Pancreas (tissue), 10 donors: ENCODE measurements at regions of chr16 and their contacts with region 1.

Region 1: DNA sequence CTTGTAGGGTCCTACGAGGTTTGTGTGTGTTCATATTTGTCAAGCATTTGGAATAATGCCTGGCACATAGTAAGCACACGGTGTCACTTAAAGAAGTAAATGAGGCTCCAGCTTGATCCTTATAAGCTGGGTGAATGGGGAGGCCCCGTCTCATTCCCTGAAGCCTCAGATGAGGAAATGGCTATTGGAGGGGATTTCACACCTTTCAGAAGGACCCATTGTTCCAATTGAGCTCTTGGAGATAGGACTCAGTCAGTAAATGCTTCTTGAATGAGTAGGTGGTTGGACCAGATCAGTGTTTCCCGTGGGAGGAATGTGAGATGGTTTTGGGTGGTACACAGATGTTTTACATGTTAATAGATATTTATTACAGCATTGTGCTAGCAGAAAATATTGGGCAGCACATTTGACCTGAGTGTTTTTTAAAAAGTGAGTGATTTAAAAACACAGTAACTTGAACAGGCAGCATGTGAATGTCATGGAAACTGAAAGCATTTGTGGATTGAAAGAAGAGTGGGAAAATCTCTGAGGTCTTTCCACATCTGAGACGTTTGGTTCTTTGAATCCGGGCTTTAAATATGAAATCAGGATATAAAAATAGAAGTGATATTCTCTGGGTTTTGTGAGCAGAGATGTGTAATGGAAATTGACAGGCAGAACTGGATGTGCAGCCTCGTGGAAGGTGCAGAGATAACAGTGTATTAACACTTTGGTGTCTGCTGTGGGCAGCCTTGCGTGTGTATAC is 36.4 kb upstream of the ARHGAP17 start:
- DNase-seq: no peak
- ATAC-seq: peak in 3 of 4 donors; percentile 1 to 5 (median 5)
- H3K4me3 ChIP-seq: peak overlapping the region in 2 of 4 donors; percentile 15
- H3K27ac ChIP-seq: peak overlapping the region in 3 of 4 donors; percentile 0 to 55 (median 24)
- H3K4me1 ChIP-seq: peaks cover 0 to 20% (median 16%) of the 10 kb centered on the region in 3 donors
- H3K27me3 ChIP-seq: no peaks in the 10 kb centered on the region
- CTCF ChIP-seq: no peak

Region 2: DNA sequence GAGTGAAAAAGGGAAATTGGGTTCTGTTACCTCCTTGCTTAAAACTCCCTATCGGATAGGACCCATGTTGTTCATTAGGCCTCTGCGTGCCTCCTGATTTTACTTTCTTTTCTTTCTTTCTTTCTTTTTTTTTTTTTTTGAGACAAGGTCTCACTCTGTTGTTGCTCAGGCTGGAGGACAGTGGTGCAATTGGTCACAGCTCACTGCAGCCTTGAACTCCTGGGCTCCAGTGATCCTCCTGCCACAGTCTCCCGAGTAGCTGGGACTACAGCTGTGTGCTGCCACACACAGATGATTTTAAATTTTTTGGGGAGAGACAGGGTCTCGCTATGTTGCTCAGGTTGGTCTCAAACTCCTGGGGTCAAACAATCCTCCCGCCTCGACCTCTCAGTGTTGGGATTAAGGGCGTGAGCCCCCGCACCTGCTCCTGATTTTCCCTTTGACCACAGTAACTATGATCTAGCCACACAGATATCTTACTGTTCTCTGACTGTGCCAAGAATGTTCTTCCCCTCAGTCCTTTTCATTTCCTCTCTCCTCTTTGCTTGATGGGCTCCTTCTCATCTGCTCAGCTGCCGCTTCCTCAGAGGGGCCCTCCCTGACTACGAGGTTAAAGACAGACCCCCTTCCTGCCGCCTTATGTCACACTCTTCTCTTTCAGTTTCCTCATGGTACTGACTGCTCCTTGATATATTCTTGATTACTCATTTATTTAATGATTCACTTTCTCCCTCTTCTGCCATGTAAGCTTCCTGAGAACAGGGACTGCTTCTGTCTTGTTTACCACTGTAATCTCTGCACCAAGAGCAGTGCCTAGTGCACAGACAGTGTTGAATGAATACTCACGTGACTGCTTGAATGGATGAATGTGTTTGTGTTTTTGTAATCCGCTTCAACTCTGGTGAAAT is 104.2 kb after region 1 on chr16:
- intact Hi-C with region 1: no loop called
- DNase-seq: no peak
- ATAC-seq: peak in 1 of 4 donors; percentile 25
- H3K4me3 ChIP-seq: no peak overlapping the region
- H3K27ac ChIP-seq: no peak overlapping the region
- H3K4me1 ChIP-seq: no peaks in the 10 kb centered on the region
- H3K27me3 ChIP-seq: no peaks in the 10 kb centered on the region
- CTCF ChIP-seq: no peak

Region 3: GRCh38 chr16:25224731-25225319 is 173.2 kb after region 1 on chr16:
- intact Hi-C with region 1: loop called in 2 of 3 experiments (anchors 10 kb)
- DNase-seq: no peak
- ATAC-seq: peak in 2 of 4 donors; percentile 2 to 16
- H3K4me3 ChIP-seq: no peak overlapping the region
- H3K27ac ChIP-seq: peak overlapping the region in 1 of 4 donors; percentile 22
- H3K4me1 ChIP-seq: peaks cover 0 to 18% (median 0%) of the 10 kb centered on the region in 3 donors
- H3K27me3 ChIP-seq: no peaks in the 10 kb centered on the region
- CTCF ChIP-seq: no peak